ENCODE measurements at regions of chr6 and their contacts with region 1.

Region 1: DNA sequence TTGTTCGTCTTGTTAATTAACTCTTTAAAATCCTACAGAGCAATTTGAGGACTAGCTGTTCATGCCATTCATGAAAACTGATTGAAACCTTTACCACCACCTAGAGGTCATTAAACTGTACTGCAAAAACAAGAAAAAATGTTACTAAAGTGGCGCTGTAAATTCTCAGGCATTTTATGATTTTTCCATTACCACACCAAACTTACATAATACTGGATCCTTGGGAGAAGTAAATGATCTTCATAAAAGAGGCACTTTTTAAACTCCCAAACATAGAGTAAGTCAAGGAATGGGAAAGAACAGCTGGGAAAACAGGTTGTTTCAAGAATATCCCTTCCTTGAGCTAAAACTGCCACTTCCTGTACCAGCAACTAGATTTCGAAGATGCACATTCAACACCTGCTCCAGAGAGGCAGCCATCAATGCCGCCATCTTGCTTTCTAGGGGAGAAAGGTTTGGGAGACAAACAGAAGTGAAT is 54.3 kb downstream of the MYLIP start:
- H3K4me3 ChIP-seq: no peak overlapping the region
- H3K27ac ChIP-seq: no peak overlapping the region
- H3K4me1 ChIP-seq: no peaks in the 10 kb centered on the region
- CTCF ChIP-seq: peak; percentile 32; the same call in 1 of the 2 replicates

Region 2: DNA sequence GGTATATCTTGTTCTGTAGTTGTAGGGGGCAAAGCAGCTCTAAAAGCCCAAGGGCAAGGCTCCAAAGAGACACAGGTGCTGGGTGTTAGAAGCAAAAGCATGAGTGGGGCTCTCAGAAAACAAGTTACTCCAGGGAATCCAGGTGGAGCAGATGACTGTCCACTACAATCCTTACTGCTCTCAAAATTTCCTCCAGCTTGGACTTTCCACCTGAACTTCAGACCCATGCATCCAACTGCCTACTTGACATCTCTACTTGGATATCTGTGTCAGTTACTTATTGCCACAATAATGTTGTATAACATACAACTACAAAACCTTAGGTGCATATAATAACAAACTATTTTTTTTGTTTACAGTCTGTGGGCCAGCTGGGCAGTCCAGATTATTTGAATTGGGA is 497.6 kb before region 1 on chr6:
- CTCF ChIA-PET with region 1: interaction called, 11 read pairs
- POLR2A ChIA-PET with region 1: no interaction called
- H3K4me3 ChIP-seq: no peak overlapping the region
- H3K27ac ChIP-seq: no peak overlapping the region
- H3K4me1 ChIP-seq: no peaks in the 10 kb centered on the region
- CTCF ChIP-seq: no peak

Region 3: DNA sequence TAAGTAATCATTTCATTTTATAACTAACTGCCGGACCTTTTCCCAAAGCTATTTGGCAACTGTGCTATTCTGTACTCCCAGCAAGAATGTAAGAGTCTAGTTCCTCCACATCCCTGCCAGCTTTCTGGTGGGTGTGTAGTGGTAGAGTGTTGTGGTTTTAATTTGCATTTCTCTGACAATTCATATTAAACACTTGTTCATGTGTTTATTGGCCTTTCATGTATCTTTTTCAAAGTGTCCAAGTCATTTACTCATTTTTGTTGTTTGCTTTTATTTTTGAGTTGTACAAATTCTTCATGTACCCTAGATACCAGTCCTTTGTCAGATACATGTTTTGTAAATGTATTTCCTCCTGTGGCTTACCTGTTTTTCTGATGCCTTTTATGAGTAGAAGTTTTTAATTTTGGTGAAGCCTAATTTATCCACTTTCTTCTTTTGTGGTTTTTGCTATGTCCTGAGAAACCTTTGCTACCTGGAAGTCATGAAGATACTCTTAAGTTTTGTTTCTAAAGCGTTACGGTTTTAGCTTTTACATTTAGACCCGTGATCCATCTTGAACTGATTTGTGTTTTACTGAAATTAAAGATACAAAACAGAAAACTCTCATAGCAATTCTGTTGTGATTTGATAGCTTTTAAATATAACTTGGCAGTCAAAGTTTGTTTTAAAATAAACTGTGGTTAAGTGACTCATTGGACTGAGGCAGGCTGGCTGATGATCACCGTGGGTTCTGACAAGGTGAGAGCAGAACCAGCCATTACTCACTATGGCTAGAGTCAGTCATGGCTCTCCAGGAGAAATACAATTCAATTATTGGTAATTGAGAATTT is 46.4 kb before region 1 on chr6:
- CTCF ChIA-PET with region 1: interaction called, 33 read pairs
- POLR2A ChIA-PET with region 1: no interaction called
- H3K4me3 ChIP-seq: no peak overlapping the region
- H3K27ac ChIP-seq: no peak overlapping the region
- H3K4me1 ChIP-seq: peaks cover 42% of the 10 kb centered on the region
- CTCF ChIP-seq: no peak

Region 4: GRCh38 chr6:16168858-16169257 is 14.4 kb before region 1 on chr6:
- CTCF ChIA-PET with region 1: interaction called, 15 read pairs
- POLR2A ChIA-PET with region 1: no interaction called
- H3K4me3 ChIP-seq: no peak overlapping the region
- H3K27ac ChIP-seq: no peak overlapping the region
- H3K4me1 ChIP-seq: peaks cover 6% of the 10 kb centered on the region; the same call in 1 of the 2 replicates
- CTCF ChIP-seq: no peak

Region 5: GRCh38 chr6:16206595-16207037 is 23.4 kb after region 1 on chr6:
- CTCF ChIA-PET with region 1: interaction called, 26 read pairs
- POLR2A ChIA-PET with region 1: no interaction called
- H3K4me3 ChIP-seq: no peak overlapping the region
- H3K27ac ChIP-seq: peak overlapping the region; percentile 89; the same call in 1 of the 2 replicates
- H3K4me1 ChIP-seq: peaks cover 8% of the 10 kb centered on the region
- CTCF ChIP-seq: peak; percentile 70

Measured in HEK293 (cell line).